Thyroid gland (tissue), 4 donors: ENCODE measurements at regions of chr17 and their contacts with region 1.

Region 1: GRCh38 chr17:62065598-62066468 is 755 bp upstream of the MED13 start:
- DNase-seq: peak; percentile 99
- H3K4me3 ChIP-seq: peak overlapping the region; percentile 76 to 99 (median 81)
- H3K27ac ChIP-seq: peak overlapping the region; percentile 95 to 100 (median 99)
- H3K4me1 ChIP-seq: peaks cover 8 to 28% of the 10 kb centered on the region in 2 donors
- H3K27me3 ChIP-seq: no peaks in the 10 kb centered on the region
- CTCF ChIP-seq: peak; percentile 66 to 95 (median 88)
- POLR2A ChIP-seq: peak in 1 of 2 donors; percentile 90

Region 2: GRCh38 chr17:61927200-61928165 is 138.3 kb before region 1 on chr17 and contains the start of gene INTS2:
- intact Hi-C with region 1: loop called (anchors 10 kb)
- DNase-seq: peak; percentile 96 to 97
- H3K4me3 ChIP-seq: peak within 1 kb of the TSS; percentile 48 to 66 (median 49)
- H3K27ac ChIP-seq: peak within 1 kb of the TSS; percentile 68 to 77 (median 70)
- H3K4me1 ChIP-seq: peaks cover 3 to 9% of the 10 kb centered on the region in 2 donors
- H3K27me3 ChIP-seq: no peaks in the 10 kb centered on the region
- CTCF ChIP-seq: peak in 1 of 6 experiments; percentile 10
- POLR2A ChIP-seq: peak in 1 of 2 donors; percentile 81
- total RNA-seq, gene INTS2: 10.9 to 16.1 (median 13.5) TPM

Region 3: DNA sequence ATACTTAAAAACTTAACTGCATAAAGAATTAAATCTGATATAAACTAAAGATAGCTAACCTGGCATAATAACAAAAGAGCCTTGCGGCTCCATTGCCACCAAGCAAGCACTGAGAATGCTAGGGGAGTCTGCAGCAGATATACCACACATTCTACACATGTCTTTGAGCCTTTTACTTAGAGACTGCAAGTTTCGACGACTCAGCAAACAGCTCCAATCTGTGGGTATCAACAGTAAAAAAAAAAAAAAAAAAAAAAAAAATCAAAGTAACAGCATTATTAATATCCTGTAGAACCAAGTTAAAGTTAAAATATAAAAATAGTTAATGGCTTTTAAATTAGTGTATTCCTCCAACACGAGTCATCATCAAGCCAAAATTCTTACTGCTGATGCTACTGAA is 110.2 kb before region 1 on chr17:
- intact Hi-C with region 1: no loop called
- DNase-seq: no peak
- H3K4me3 ChIP-seq: no peak overlapping the region
- H3K27ac ChIP-seq: no peak overlapping the region
- H3K4me1 ChIP-seq: no peaks in the 10 kb centered on the region
- H3K27me3 ChIP-seq: no peaks in the 10 kb centered on the region
- CTCF ChIP-seq: no peak
- POLR2A ChIP-seq: no peak